ENCODE measurements at regions of chr21 and their contacts with region 1.

Region 1: GRCh38 chr21:16419188-16419921 is 689.6 kb downstream of the USP25 start:
- DNase-seq: peak; percentile 90
- ATAC-seq: peak; percentile 95 to 98

Region 2: DNA sequence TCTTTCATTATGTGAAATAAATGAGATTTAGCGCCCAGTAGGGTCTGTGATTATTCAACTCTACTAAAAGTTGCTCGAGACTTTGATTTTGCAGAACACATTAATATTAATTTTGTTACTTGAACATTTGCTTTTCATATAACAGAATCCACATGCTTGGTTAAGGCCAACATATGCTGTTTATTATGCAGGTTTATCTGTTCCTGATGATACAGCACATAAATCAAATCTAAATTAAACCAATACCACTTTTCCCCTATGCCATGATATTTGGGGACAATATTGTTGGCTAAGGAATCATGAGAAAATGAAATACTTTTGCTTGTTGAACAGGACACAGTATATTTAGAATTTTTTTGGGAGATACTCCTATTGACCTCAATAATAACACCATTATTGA is 398.5 kb before region 1 on chr21:
- intact Hi-C with region 1: no loop called
- DNase-seq: no peak
- ATAC-seq: no peak

Region 3: GRCh38 chr21:16154951-16155635 is 264.3 kb before region 1 on chr21:
- intact Hi-C with region 1: no loop called
- DNase-seq: no peak
- ATAC-seq: no peak

Region 4: DNA sequence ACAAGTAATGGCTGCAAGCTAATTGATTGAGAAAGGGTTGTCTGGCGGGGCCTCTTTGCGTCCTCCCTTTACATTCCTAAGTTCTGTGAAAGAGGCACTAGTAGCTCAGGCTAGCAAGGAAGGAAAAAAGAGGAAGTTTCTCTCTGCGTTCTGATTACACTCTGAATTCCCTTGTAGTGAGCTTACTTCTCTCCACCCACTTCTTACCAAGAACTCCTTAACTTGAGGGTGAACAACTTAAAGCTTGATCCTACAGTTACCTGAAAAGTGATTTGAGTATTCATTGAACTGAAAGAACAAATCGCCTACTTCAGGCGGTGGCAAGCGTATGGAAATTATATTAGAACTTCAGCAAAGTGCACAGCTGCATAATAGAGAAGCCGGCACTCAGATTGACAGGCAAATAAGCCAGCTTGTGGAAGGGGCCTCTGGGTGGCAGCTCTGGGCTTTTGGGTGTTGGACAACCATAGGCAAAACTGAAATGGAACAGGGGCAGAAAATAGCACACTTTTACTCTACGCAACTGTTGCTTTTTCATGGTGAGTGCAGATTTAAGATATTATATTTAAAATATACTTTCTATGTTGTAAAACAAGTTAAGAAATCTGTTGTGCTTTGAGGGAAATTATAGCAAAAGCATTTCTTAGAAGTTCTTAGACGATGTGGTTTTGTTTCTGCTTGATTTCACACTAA is 225.1 kb before region 1 on chr21:
- intact Hi-C with region 1: loop called in 1 of 2 experiments (anchors 5 kb)
- DNase-seq: peak; percentile 61
- ATAC-seq: peak; percentile 83 to 88

Region 5: GRCh38 chr21:16216288-16216962 is 202.9 kb before region 1 on chr21:
- intact Hi-C with region 1: no loop called
- DNase-seq: no peak
- ATAC-seq: no peak

Region 6: DNA sequence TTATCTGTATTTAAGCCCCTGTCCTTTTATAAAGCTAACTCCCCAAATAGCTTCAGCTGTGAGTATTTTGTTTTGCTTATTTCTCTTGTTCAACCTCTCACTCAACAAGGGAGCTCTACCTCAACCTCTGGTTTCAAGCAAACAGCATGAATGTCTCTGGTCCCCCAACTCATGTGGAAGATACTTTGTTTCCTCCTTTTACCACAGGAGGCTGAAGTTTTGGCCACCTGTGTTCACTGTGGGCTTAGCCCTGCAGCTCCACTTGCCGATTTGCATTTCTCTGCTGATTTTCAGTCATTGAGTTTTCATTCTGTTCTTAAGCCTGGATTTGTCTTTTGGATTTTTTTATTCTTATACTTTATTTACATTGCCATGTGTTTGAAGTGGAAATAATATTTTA is 76.4 kb before region 1 on chr21:
- intact Hi-C with region 1: no loop called
- DNase-seq: no peak
- ATAC-seq: no peak

Region 7: GRCh38 chr21:16534408-16535101 is 115.2 kb after region 1 on chr21:
- intact Hi-C with region 1: loop called in 1 of 2 experiments (anchors 2 kb)
- DNase-seq: peak; percentile 78
- ATAC-seq: peak; percentile 77 to 78